ENCODE measurements at regions of chr7 and their contacts with region 1.

Region 1: GRCh38 chr7:67625257-67625737 is 628.7 kb downstream of the TYW1 start:
- DNase-seq: peak; percentile 80 to 87 (median 83)
- ATAC-seq: peak; percentile 80 to 93 (median 90)
- H3K4me3 ChIP-seq: peak overlapping the region in 7 of 12 donors; percentile 15 to 39 (median 31)
- H3K27ac ChIP-seq: no peak overlapping the region
- H3K4me1 ChIP-seq: peaks cover 0 to 7% (median 0%) of the 10 kb centered on the region in 12 donors
- H3K27me3 ChIP-seq: peaks cover 0 to 24% (median 2%) of the 10 kb centered on the region in 9 donors
- CTCF ChIP-seq: peak; percentile 72 to 92 (median 88)
- POLR2A ChIP-seq: no peak

Region 2: GRCh38 chr7:67683628-67684027 is 58.3 kb after region 1 on chr7:
- intact Hi-C with region 1: loop called in 1 of 10 experiments (anchors 10 kb)
- DNase-seq: no peak
- ATAC-seq: no peak
- H3K4me3 ChIP-seq: no peak overlapping the region
- H3K27ac ChIP-seq: no peak overlapping the region
- H3K4me1 ChIP-seq: no peaks in the 10 kb centered on the region
- H3K27me3 ChIP-seq: no peaks in the 10 kb centered on the region
- CTCF ChIP-seq: no peak
- POLR2A ChIP-seq: no peak

Region 3: DNA sequence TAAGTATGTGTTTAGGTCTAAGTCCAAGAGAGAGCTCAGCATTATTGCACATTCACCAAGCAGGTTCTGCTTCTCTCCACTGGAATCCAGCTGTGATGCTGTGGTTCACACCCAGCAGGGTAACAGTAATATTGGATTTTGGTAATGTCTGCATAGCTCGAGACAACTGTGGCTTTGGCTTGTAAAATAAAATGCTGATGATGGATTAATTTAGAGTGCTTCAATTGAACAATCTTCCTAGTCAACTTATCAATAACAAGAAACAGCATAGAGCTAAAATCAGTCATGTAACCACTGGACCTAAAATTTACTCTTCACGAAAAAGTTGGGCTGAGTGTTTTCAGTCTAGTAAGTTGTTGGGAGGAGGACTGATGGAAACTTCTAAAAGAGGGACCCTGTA is 80.6 kb after region 1 on chr7:
- intact Hi-C with region 1: no loop called
- DNase-seq: no peak
- ATAC-seq: no peak
- H3K4me3 ChIP-seq: no peak overlapping the region
- H3K27ac ChIP-seq: no peak overlapping the region
- H3K4me1 ChIP-seq: no peaks in the 10 kb centered on the region
- H3K27me3 ChIP-seq: no peaks in the 10 kb centered on the region
- CTCF ChIP-seq: no peak
- POLR2A ChIP-seq: no peak

Region 4: DNA sequence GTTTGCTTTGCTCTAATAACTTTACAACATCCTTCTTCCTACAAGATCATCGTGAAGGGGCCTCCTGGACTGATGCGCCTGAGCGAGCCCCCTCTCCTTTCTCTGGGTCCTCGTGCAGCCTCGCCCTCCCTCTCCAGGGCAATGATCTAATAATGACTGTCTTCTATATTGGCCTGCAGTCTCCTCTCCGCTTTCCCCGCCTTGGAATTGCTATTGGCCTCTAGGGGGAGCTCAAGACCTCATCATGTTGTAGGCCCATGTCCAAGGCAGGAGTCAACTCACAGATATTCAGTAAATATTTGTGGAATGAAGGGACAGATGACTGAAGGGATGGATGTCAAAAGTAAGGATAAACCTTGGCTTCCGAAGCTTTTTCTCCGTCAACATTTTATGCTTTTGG is 551.7 kb after region 1 on chr7:
- intact Hi-C with region 1: loop called in 1 of 10 experiments (anchors 10 kb)
- DNase-seq: peak in 3 of 5 donors; percentile 28 to 39 (median 33)
- ATAC-seq: peak in 3 of 4 donors; percentile 61 to 72 (median 70)
- H3K4me3 ChIP-seq: no peak overlapping the region
- H3K27ac ChIP-seq: no peak overlapping the region
- H3K4me1 ChIP-seq: no peaks in the 10 kb centered on the region
- H3K27me3 ChIP-seq: peaks cover 0 to 5% (median 0%) of the 10 kb centered on the region in 9 donors
- CTCF ChIP-seq: peak; percentile 53 to 80 (median 70)
- POLR2A ChIP-seq: no peak

Measured in heart left ventricle (tissue), 16 donors.